Pancreas (tissue), 10 donors: ENCODE measurements at regions of chr11 and their contacts with region 1.

Region 1: DNA sequence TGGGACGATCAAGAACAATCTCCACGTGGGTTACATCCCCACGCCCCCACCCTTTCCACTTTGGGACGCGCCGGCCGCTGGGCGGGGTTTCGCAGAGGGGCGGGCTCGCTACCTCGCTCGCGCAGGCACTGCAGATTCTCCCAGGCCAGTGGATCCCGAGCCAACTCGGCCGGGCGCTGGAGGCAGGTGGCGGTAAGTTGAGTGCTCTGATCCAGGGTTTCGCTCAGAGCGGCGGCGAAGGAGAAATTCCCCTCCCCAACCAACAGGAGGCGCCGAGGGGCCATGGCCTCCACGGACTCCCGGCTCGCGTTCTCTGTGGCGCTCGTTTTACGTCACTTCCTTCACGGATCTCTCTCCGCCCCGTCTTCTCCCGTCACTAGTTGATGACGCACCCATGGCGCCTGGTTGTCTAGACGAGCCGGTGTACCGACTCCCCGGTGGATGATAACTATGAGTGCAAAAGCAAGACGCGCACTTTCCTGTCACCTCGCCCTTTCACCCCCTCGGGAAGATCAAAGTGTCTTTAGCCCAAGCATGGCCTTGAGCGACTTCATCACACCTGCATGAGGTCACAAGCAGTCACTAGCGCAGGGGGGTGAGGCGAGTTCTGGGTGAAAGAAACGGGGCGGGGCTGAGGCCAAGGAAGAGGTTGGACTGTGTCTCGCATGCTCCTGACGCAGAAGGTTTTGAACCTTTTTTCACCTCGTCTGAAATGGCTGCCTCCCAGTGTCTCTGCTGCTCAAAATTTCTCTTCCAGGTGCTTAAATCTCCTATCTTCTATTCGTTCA is at the starts of genes CFAP68 and FDXACB1:
- DNase-seq: peak; percentile 95 to 98 (median 98)
- ATAC-seq: peak; percentile 88 to 98 (median 92)
- H3K4me3 ChIP-seq: peak within 1 kb of the TSS; percentile 32 to 64 (median 42)
- H3K27ac ChIP-seq: peak within 1 kb of the TSS; percentile 91 to 97 (median 96)
- H3K4me1 ChIP-seq: no peaks in the 10 kb centered on the region
- H3K27me3 ChIP-seq: no peaks in the 10 kb centered on the region
- CTCF ChIP-seq: peak; percentile 90 to 96 (median 94)
- total RNA-seq, gene CFAP68: 14.3 to 24.9 (median 16.0) TPM
- total RNA-seq, gene FDXACB1: 0.51 to 1.2 (median 1.1) TPM

Region 2: DNA sequence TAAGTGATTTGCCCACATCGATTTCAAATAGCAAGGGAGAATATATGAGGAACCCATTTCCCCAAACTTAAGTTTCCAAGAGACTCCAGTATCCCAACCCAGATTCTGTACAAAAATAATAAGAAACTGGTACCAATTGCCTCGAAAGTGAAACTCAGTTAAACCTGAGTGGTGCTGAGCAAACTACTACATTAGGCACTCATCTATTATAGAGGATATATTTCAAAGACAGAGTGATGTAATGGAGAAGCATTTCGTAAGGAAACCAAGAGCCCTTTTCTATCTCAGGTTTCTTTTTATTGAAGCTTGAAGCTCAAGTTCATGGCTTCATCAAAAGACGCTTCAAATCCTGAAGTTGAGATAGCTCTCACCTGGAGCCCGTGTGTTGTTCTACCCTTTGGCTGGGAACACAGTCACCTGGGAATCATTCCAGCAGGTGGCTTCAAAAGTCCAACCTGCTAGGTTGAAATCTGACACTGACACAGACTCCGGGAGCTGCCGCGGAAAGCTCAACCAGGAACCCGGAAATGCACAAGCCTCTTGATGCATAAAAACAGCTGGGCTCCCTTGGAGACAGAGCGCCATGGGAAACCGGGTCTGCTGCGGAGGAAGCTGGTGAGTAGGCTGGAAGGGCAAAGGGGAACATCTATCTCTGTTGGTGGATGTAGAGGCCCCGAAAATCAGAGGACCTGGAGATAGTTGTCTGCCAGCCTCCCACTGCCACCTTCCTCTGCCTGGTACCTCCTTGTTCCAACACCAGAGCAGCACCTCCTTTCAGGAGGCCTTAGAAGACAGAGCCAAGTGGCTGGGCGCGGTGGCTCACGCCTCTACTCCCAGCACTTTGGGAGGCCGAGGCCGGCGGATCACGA is 39.6 kb after region 1 on chr11 and contains the start of gene C11orf52:
- intact Hi-C with region 1: loop called in 2 of 3 experiments (anchors 5 kb)
- DNase-seq: peak; percentile 78 to 94 (median 92)
- ATAC-seq: peak; percentile 89 to 94 (median 92)
- H3K4me3 ChIP-seq: peak within 1 kb of the TSS; percentile 6 to 47 (median 29)
- H3K27ac ChIP-seq: peak within 1 kb of the TSS; percentile 71 to 94 (median 88)
- H3K4me1 ChIP-seq: peaks cover 19 to 31% (median 26%) of the 10 kb centered on the region in 3 donors
- H3K27me3 ChIP-seq: no peaks in the 10 kb centered on the region
- CTCF ChIP-seq: no peak
- total RNA-seq, gene C11orf52: 9.3 to 18.5 (median 11.7) TPM

Region 3: GRCh38 chr11:111926505-111927391 is 47.7 kb after region 1 on chr11:
- intact Hi-C with region 1: loop called in 1 of 3 experiments (anchors 5 kb)
- DNase-seq: peak; percentile 97 to 98 (median 98)
- ATAC-seq: peak; percentile 91 to 95 (median 92)
- H3K4me3 ChIP-seq: peak overlapping the region in 2 of 4 donors; percentile 15 to 32
- H3K27ac ChIP-seq: peak overlapping the region; percentile 61 to 91 (median 82)
- H3K4me1 ChIP-seq: peaks cover 24 to 39% (median 37%) of the 10 kb centered on the region in 3 donors
- H3K27me3 ChIP-seq: no peaks in the 10 kb centered on the region
- CTCF ChIP-seq: no peak

Region 4: DNA sequence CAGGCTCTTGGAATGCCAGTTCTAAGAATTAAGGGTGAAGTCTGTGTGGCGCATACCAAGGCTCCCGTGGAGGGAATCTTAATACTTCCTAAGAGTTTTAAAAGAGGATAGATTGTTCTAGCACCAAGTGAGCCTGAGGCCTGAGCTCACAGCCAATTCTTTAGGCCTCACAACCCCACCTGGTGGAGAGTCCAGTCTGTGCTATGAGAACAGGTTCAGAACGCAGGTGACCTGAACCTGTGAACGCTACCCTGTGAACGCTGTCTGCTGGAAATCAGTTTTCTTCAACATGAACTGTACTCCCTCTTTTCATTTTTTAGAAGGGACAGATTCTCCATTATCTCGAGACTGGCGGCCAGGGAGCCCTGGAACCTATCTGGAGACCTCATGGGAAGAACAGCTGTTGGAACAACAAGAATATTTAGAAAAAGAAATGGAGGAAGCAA is 103.0 kb after region 1 on chr11:
- intact Hi-C with region 1: loop called in 2 of 3 experiments (anchors 5 to 10 kb)
- DNase-seq: peak; percentile 65 to 89 (median 82)
- ATAC-seq: peak; percentile 84 to 93 (median 89)
- H3K4me3 ChIP-seq: peak overlapping the region; percentile 31 to 53 (median 38)
- H3K27ac ChIP-seq: peak overlapping the region; percentile 63 to 95 (median 88)
- H3K4me1 ChIP-seq: peaks cover 13 to 22% (median 14%) of the 10 kb centered on the region in 3 donors
- H3K27me3 ChIP-seq: no peaks in the 10 kb centered on the region
- CTCF ChIP-seq: peak; percentile 55 to 74 (median 66)